ENCODE measurements at regions of chr14 and their contacts with region 1.

Region 1: DNA sequence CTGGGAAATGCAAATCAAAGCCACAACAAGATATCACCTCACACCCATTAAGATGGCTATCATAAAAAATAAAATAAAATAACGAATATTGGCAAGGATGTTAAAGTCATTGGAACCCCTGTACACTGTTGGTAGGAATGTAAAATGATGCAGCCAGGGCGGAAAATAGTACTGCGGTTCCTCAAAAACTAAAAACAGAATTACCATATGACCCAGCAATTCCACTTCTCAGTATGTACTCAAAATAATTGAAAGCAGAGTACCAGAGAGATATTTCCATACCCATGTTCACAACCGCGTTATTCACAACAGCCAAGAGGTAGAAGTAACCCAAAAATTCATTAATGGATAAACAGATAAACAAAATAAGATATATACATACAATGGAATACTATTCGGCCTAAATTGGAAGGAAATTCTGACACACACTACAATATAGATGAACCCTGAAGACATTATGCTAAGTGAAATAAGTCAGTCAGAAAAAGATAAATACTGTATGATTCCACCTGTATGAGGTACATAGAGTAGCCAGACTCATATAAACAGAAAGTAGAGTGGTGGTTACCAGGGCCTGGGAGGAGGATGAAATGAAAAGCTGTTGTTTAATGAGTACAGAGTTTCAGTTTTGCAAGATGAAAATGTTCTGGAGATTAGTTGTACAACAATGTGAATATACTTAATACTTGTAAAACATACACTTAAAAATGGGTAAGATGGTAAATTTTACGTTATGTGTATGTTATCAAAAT is 84.6 kb downstream of the TXNDC16 start:
- DNase-seq: no peak
- H3K4me3 ChIP-seq: no peak overlapping the region
- H3K27ac ChIP-seq: no peak overlapping the region
- H3K4me1 ChIP-seq: no peaks in the 10 kb centered on the region
- H3K27me3 ChIP-seq: no peaks in the 10 kb centered on the region
- CTCF ChIP-seq: no peak

Region 2: GRCh38 chr14:52442602-52443001 is 25.1 kb before region 1 on chr14:
- CTCF ChIA-PET with region 1: interaction called, 17 read pairs
- POLR2A ChIA-PET with region 1: no interaction called
- intact Hi-C with region 1: no loop called
- DNase-seq: no peak
- H3K4me3 ChIP-seq: no peak overlapping the region
- H3K27ac ChIP-seq: no peak overlapping the region
- H3K4me1 ChIP-seq: no peaks in the 10 kb centered on the region
- H3K27me3 ChIP-seq: no peaks in the 10 kb centered on the region
- CTCF ChIP-seq: no peak

Region 3: GRCh38 chr14:52455291-52456088 is 12.2 kb before region 1 on chr14:
- CTCF ChIA-PET with region 1: interaction called, 16 read pairs
- POLR2A ChIA-PET with region 1: no interaction called
- intact Hi-C with region 1: no loop called
- DNase-seq: no peak
- H3K4me3 ChIP-seq: no peak overlapping the region
- H3K27ac ChIP-seq: no peak overlapping the region
- H3K4me1 ChIP-seq: no peaks in the 10 kb centered on the region
- H3K27me3 ChIP-seq: no peaks in the 10 kb centered on the region
- CTCF ChIP-seq: no peak

Region 4: DNA sequence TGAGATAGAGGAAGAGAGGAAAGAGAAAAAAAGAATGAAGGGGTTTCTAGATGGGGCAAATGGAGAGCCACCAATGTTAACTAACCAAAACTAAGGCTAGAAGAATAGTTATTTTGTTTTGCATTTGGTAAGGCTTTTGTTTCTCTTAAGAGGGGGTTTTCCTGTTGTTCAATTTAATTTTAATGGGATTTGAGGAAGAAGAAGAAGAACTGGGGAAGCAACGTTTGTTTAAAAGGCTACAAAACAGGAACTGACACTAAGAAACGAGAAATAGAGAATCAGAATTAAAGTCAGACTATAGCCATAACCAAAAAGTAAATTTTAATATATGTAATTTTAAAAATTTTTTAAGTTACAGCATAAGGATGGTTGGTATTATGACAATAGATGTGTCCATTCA is 70.9 kb after region 1 on chr14:
- CTCF ChIA-PET with region 1: interaction called, 13 read pairs
- POLR2A ChIA-PET with region 1: no interaction called
- intact Hi-C with region 1: no loop called
- DNase-seq: no peak
- H3K4me3 ChIP-seq: no peak overlapping the region
- H3K27ac ChIP-seq: no peak overlapping the region
- H3K4me1 ChIP-seq: no peaks in the 10 kb centered on the region
- H3K27me3 ChIP-seq: no peaks in the 10 kb centered on the region
- CTCF ChIP-seq: no peak

Region 5: GRCh38 chr14:53055003-53055402 is 587.3 kb after region 1 on chr14:
- CTCF ChIA-PET with region 1: no interaction called
- POLR2A ChIA-PET with region 1: no interaction called
- intact Hi-C with region 1: loop called (anchors 5 kb)
- DNase-seq: peak; percentile 63
- H3K4me3 ChIP-seq: no peak overlapping the region
- H3K27ac ChIP-seq: no peak overlapping the region
- H3K4me1 ChIP-seq: no peaks in the 10 kb centered on the region
- H3K27me3 ChIP-seq: no peaks in the 10 kb centered on the region
- CTCF ChIP-seq: peak; percentile 83

Region 6: GRCh38 chr14:53470351-53471043 is 1002.8 kb after region 1 on chr14:
- CTCF ChIA-PET with region 1: no interaction called
- POLR2A ChIA-PET with region 1: no interaction called
- intact Hi-C with region 1: no loop called
- DNase-seq: no peak
- H3K4me3 ChIP-seq: no peak overlapping the region
- H3K27ac ChIP-seq: no peak overlapping the region
- H3K4me1 ChIP-seq: no peaks in the 10 kb centered on the region
- H3K27me3 ChIP-seq: peaks cover 11% of the 10 kb centered on the region
- CTCF ChIP-seq: no peak